GM10248 (cell line): ENCODE measurements at regions of chr3 and their contacts with region 1.

Region 1: DNA sequence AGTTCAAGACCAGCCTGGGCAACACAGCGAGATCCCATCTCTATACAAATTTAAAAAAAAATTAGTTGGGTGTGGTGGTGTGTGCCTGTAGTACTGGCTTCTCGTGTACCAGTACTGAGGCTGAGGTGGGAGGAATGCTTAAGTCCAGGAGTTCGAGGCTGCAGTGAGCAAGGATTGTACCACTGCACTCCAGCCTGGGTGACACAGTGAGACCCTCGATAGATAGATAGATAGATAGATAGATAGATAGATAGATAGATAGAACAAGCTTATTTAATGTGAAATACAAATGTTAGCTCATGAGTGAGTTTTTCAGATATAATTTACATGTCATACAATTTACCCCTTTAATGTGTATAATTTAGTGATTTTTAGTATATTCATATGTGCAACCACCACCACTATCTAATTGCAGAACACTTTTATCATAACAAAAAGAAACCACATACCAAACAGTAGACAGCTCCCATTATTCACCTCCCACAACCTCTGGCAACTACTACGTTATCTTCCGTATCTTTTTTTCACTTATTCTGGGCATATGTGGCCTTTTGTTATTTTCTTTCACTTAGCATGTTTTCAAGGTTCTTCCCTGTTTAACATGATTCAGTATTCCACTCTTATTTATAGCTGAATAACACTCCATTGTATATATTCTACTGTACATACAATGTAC is 13.1 kb upstream of the PRRT3 start:
- DNase-seq: no peak
- CTCF ChIP-seq: no peak

Region 2: GRCh38 chr3:9951962-9952805 is 13.2 kb before region 1 on chr3 and contains the start of gene PRRT3:
- CTCF ChIA-PET with region 1: interaction called, 16 read pairs
- POLR2A ChIA-PET with region 1: no interaction called
- DNase-seq: peak; percentile 83
- CTCF ChIP-seq: no peak

Region 3: DNA sequence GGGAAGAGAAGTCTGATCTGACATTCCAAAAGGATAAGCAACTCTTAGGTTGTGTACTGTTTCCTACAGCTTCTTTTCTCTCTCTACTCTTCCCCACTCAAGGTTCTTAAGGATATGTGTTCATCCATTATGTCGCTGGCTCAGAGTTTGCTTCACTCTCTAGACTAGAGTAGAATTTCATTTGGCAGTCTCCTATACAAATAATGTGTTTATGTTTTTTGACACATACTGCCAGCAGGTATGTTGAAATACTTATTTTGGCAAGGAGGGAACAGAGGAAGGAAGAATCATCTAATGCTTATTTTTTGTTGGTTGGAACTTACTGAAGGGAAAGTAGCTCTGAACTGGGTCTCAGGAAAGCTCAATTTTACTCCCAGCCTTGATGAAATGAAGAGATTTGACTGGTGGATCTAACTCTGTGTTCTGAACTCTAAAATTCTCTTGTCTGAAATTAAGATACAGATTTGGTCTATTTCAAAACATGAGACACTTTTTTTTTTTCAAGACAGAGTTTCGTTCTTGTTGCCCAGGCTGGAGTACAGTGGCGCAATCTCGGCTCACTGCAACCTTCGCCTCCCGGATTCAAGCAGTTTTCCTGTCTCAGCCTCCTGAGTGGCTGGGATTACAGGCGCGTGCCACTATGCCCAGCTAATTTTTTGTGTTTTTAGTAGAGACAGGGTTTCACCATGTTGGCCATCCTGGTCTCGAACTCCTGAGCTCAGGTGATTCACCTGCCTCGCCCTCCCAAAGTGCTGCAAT is 28.9 kb after region 1 on chr3:
- CTCF ChIA-PET with region 1: no interaction called
- POLR2A ChIA-PET with region 1: no interaction called
- DNase-seq: no peak
- CTCF ChIP-seq: no peak

Region 4: GRCh38 chr3:10004960-10005564 is 39.7 kb after region 1 on chr3:
- CTCF ChIA-PET with region 1: no interaction called
- POLR2A ChIA-PET with region 1: no interaction called
- DNase-seq: no peak
- CTCF ChIP-seq: no peak